Naive thymus-derived CD4-positive, alpha-beta T cell (primary cell): ENCODE measurements at regions of chr4 and their contacts with region 1.

Region 1: DNA sequence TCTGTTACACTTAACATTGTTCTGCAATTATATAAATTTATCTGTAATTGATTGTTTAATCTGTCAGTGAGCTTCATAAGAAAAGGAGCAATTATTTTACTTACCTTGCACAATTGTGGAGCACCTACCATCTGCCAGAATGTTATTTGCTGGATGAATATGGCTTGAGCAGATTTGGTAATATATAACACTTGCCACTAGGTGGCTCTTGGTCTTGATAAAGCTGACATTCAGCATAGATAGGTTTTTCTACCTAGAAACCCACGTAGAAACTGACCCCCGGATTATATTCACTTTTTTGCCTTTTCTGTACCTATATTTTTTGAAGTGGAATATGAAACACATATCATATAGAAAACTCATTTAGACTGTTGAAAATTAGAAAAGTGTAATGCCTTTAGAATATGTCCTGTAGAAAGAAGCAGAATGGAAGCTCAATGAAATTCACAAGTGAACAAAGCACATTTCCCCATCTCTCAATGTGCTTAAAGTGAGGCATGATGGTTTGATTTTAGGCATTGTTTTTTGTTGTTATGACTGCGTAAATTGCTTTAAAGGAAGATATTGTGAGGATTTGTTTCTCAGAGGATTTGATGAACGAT is 9.5 kb downstream of the RBPJ start:
- DNase-seq: peak in 7 of 9 donors; percentile 19 to 50 (median 46)
- ATAC-seq: peak; percentile 86
- H3K4me3 ChIP-seq: no peak overlapping the region
- H3K4me3 Mint-ChIP-seq: peak overlapping the region in 4 of 10 donors; percentile 11 to 44 (median 32)
- H3K27ac ChIP-seq: no peak overlapping the region
- H3K27ac Mint-ChIP-seq: peak overlapping the region in 2 of 9 donors; percentile 3 to 60
- H3K4me1 ChIP-seq: no peaks in the 10 kb centered on the region
- H3K4me1 Mint-ChIP-seq: peaks cover 30 to 60% (median 52%) of the 10 kb centered on the region in 7 donors
- H3K27me3 ChIP-seq: no peaks in the 10 kb centered on the region
- H3K27me3 Mint-ChIP-seq: no peaks in the 10 kb centered on the region

Region 2: DNA sequence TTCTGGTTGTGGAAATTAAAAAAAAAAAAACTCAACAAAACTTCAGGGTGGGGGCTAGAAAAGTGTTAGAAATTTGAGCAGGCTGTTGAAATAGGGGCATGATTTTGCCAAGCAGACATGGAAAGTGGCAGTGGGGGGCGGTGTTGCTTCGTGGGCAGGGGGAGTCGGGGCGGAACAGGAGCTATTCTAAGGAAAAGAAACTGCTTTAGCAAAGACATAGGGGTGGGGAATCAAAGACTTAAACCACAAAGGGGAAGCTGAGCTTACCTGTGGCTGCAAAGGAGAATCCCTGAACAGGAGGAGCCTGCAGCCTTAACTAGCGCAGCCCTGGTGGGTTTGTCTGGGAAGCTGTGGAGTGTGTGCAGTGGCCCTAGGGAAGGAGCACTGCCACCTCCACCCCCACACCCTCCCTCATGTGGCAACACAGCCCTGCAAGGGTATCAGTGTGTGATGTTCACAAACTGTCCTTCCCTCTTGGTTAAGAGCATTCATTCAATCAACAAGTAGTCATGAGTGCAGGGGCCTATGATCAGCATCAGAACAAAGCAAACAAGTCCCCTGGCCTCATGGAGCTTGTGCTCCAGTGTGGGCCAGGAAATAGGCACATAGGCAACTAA is 487.9 kb before region 1 on chr4:
- CTCF ChIA-PET with region 1: interaction called, 3 read pairs
- POLR2A ChIA-PET with region 1: no interaction called
- intact Hi-C with region 1: loop called (anchors 5 kb)
- DNase-seq: peak in 7 of 9 donors; percentile 24 to 51 (median 46)
- ATAC-seq: peak; percentile 78
- H3K4me3 ChIP-seq: no peak overlapping the region
- H3K4me3 Mint-ChIP-seq: peak overlapping the region; percentile 1 to 63 (median 40)
- H3K27ac ChIP-seq: no peak overlapping the region
- H3K27ac Mint-ChIP-seq: peak overlapping the region in 4 of 9 donors; percentile 16 to 84 (median 40)
- H3K4me1 ChIP-seq: peaks cover 5 to 14% of the 10 kb centered on the region in 2 donors
- H3K4me1 Mint-ChIP-seq: peaks cover 27 to 55% (median 37%) of the 10 kb centered on the region in 7 donors
- H3K27me3 ChIP-seq: no peaks in the 10 kb centered on the region
- H3K27me3 Mint-ChIP-seq: no peaks in the 10 kb centered on the region

Region 3: DNA sequence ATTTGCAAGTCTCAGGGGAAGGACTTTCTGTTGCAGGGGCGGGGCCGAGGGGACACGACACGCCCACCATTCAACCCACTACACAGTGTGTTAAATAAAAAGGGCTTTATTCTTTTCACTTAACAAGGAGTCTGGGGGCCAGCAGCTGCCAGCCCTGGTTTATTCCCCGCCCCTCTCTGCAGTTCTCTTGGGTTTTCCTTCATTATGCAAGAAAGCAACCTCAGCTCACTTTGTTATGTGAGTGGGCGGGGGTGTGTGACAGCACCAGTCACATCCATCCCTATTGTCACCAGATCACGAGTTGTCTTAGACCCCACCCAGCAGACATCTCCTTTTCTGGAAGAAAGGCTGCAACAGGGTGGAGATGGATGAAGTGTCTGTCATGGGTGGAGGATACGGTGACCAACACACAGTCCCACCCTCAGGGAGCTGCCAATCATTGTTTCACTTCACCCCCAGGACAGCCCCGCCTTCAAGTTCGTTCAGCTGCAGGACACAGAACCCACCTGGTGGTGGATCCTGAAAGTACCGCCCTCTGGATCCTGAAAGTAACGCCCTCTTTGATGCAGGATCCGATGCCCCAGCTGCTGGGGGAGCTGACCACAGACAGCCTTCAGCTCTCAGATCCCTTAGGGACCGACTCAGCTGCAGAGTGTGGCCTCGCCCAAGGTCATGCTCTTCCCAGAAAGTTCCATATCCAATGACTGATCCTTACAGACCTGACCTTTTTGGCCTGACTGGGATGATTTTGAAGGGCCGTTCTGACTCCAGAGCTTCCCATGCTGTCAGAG is 336.7 kb before region 1 on chr4:
- CTCF ChIA-PET with region 1: interaction called, 4 read pairs
- POLR2A ChIA-PET with region 1: no interaction called
- intact Hi-C with region 1: loop called (anchors 1 kb)
- DNase-seq: peak in 1 of 9 donors; percentile 8
- ATAC-seq: peak; percentile 41
- H3K4me3 ChIP-seq: no peak overlapping the region
- H3K4me3 Mint-ChIP-seq: no peak overlapping the region
- H3K27ac ChIP-seq: no peak overlapping the region
- H3K27ac Mint-ChIP-seq: peak overlapping the region in 2 of 9 donors; percentile 48 to 62
- H3K4me1 ChIP-seq: no peaks in the 10 kb centered on the region
- H3K4me1 Mint-ChIP-seq: peaks cover 0 to 11% (median 0%) of the 10 kb centered on the region in 7 donors
- H3K27me3 ChIP-seq: no peaks in the 10 kb centered on the region
- H3K27me3 Mint-ChIP-seq: no peaks in the 10 kb centered on the region

Region 4: DNA sequence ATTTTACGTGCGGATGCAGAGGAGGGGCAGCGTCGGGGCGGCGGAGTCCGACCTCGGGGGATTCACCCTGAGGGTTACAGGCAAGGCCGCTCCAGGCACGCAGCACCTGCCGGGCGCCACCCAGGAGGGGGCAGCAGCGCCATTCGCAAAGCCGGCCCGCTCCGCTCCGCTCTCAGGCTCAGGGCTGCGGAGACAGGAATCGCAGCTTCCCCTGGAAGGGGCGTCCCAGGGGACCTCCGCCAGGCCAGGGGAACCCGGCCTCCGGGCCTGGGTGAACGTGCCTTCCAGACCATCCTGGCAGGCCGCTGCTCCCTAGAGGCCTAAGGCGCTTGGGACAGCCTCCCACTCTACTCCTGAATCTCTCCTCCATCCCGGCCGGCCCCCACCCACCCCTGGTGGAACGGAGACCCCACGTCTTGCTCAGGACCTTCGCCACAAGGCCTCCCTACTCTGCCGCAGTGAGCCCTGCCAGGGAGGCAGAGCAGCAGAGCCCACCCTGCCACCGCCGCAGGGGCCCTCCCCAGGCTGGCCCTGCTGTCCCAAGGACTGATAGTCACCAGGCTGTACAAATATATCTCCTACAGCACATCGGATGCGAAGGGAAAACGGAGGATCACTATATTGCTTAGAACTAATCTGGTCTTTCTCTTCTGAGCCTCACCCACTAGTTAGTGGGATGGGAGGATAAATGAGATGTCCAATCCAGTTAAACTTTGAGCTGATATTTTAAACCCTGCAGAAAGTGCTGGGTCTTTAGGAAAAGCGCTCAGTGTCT is 301.3 kb before region 1 on chr4:
- CTCF ChIA-PET with region 1: interaction called, 5 read pairs
- POLR2A ChIA-PET with region 1: no interaction called
- intact Hi-C with region 1: loop called (anchors 1 kb)
- DNase-seq: peak in 8 of 9 donors; percentile 11 to 82 (median 18)
- ATAC-seq: peak; percentile 80
- H3K4me3 ChIP-seq: no peak overlapping the region
- H3K4me3 Mint-ChIP-seq: peak overlapping the region in 2 of 10 donors; percentile 12 to 39
- H3K27ac ChIP-seq: no peak overlapping the region
- H3K27ac Mint-ChIP-seq: no peak overlapping the region
- H3K4me1 ChIP-seq: no peaks in the 10 kb centered on the region
- H3K4me1 Mint-ChIP-seq: peaks cover 0 to 10% (median 0%) of the 10 kb centered on the region in 7 donors
- H3K27me3 ChIP-seq: peaks cover 0 to 4% of the 10 kb centered on the region in 2 donors
- H3K27me3 Mint-ChIP-seq: peaks cover 0 to 27% (median 16%) of the 10 kb centered on the region in 5 donors

Region 5: DNA sequence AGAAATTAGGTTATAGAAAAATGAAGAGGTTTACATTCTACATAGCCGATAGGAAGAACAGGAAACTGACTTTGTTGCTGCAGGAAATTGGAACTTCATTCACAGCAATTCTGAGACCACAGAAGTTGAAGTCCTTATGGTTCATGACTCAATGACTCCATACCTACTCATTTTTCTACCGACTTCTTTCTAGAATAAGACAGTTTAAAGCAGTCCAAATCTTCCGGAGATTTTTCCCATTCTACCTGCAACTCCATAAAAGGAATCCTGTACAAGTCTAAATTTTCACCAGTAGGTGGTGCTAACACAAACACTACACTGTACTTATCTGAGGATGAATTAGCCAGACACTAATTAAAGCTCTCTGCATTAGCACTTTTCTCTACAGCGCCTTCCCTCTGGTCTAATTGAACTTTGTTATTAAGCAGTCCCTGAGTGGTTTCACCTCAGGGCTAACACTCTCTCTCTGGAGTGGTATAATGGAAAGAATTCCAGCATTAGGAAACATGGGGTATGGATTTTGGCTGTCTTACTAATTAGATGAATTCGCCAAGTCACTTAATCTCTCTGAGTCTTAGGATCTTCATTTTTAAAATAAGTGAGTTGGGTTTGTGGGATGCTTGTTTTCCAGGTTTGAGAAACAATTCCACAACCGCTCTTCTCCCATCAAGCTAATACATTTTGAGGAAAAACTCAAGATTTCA is 248.3 kb before region 1 on chr4:
- CTCF ChIA-PET with region 1: interaction called, 8 read pairs
- POLR2A ChIA-PET with region 1: no interaction called
- intact Hi-C with region 1: loop called (anchors 1 kb)
- DNase-seq: peak in 5 of 9 donors; percentile 16 to 29 (median 22)
- ATAC-seq: peak; percentile 66
- H3K4me3 ChIP-seq: no peak overlapping the region
- H3K4me3 Mint-ChIP-seq: peak overlapping the region in 1 of 10 donors; percentile 49
- H3K27ac ChIP-seq: no peak overlapping the region
- H3K27ac Mint-ChIP-seq: peak overlapping the region in 1 of 9 donors; percentile 73
- H3K4me1 ChIP-seq: no peaks in the 10 kb centered on the region
- H3K4me1 Mint-ChIP-seq: peaks cover 0 to 65% (median 6%) of the 10 kb centered on the region in 7 donors
- H3K27me3 ChIP-seq: no peaks in the 10 kb centered on the region
- H3K27me3 Mint-ChIP-seq: peaks cover 0 to 38% (median 7%) of the 10 kb centered on the region in 5 donors

Region 6: DNA sequence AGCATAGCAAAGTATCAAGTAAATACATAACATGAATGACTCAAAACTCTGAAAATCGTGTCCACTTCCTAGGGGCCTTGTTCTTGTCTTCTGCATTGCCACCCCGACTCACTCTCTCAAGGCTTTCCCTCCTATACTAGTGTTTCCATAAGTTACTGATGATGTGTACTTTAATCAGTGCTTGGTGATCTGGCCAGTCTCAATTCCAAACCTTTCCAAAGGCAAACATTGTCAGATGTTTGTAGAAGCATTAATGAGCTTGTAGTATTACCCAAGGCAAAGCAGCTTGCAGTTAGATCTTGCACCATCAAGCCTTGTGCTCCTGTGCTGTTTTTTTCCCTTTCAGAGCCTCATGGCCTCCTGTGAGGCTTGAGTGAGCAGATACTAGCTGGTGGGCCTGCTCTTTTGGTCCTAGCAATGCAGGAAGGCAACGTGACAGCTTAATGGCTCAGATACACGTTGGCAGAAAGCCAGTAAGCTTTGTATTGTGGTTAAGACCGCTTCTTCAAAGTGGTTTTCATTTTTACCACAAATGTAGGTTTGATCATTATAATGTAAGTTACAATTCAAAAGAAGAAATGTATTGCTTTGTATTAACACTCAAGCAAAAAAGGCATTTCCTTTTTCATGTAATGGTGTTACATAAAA is 42.4 kb after region 1 on chr4:
- CTCF ChIA-PET with region 1: no interaction called
- POLR2A ChIA-PET with region 1: interaction called, 3 read pairs
- intact Hi-C with region 1: loop called (anchors 5 kb)
- DNase-seq: peak in 8 of 9 donors; percentile 23 to 70 (median 58)
- ATAC-seq: peak; percentile 78
- H3K4me3 ChIP-seq: no peak overlapping the region
- H3K4me3 Mint-ChIP-seq: peak overlapping the region in 7 of 10 donors; percentile 2 to 70 (median 21)
- H3K27ac ChIP-seq: no peak overlapping the region
- H3K27ac Mint-ChIP-seq: peak overlapping the region in 4 of 9 donors; percentile 2 to 32 (median 16)
- H3K4me1 ChIP-seq: peaks cover 16% of the 10 kb centered on the region in 2 donors
- H3K4me1 Mint-ChIP-seq: peaks cover 34 to 66% (median 55%) of the 10 kb centered on the region in 7 donors
- H3K27me3 ChIP-seq: no peaks in the 10 kb centered on the region
- H3K27me3 Mint-ChIP-seq: peaks cover 0 to 6% (median 0%) of the 10 kb centered on the region in 5 donors

Region 7: DNA sequence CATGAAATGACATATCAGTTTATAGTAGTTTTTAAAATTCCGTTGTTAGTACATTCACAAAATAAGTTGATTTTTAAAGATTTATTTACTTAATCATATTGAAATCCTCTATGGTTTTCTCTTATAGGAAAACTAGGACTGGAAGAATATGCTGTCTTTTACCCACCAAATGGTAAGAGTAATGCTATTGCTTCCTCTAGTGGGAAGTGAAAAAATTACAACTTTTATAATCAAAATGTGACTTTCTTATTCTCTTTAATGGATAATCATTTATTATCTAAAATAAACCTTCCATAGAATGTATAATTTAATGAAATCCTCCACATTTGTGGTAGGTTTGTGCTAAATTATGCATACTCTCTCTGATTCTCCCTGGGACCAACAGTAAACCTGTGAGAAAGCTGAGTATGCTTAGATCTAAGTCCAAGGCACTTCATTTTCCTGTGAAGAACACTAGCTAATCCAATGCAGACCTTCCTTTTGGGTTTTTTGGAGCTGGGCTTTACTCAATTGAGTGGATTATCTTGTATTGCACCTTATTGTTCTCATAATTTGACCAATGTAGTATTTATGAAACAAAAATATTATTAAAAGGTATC is 389.8 kb after region 1 on chr4:
- CTCF ChIA-PET with region 1: interaction called, 3 read pairs
- POLR2A ChIA-PET with region 1: no interaction called
- intact Hi-C with region 1: loop called in 1 of 2 experiments (anchors 1 kb)
- DNase-seq: no peak
- ATAC-seq: no peak
- H3K4me3 ChIP-seq: no peak overlapping the region
- H3K4me3 Mint-ChIP-seq: no peak overlapping the region
- H3K27ac ChIP-seq: no peak overlapping the region
- H3K27ac Mint-ChIP-seq: no peak overlapping the region
- H3K4me1 ChIP-seq: peaks cover 5 to 9% of the 10 kb centered on the region in 2 donors
- H3K4me1 Mint-ChIP-seq: peaks cover 0 to 23% (median 13%) of the 10 kb centered on the region in 7 donors
- H3K27me3 ChIP-seq: no peaks in the 10 kb centered on the region
- H3K27me3 Mint-ChIP-seq: no peaks in the 10 kb centered on the region